ENCODE measurements at regions of chr4 and their contacts with region 1.

Region 1: DNA sequence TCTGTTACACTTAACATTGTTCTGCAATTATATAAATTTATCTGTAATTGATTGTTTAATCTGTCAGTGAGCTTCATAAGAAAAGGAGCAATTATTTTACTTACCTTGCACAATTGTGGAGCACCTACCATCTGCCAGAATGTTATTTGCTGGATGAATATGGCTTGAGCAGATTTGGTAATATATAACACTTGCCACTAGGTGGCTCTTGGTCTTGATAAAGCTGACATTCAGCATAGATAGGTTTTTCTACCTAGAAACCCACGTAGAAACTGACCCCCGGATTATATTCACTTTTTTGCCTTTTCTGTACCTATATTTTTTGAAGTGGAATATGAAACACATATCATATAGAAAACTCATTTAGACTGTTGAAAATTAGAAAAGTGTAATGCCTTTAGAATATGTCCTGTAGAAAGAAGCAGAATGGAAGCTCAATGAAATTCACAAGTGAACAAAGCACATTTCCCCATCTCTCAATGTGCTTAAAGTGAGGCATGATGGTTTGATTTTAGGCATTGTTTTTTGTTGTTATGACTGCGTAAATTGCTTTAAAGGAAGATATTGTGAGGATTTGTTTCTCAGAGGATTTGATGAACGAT is 9.5 kb downstream of the RBPJ start:
- DNase-seq: peak; percentile 53
- CTCF ChIP-seq: peak; percentile 62

Region 2: GRCh38 chr4:25704516-25704915 is 625.8 kb before region 1 on chr4:
- CTCF ChIA-PET with region 1: no interaction called
- POLR2A ChIA-PET with region 1: no interaction called
- DNase-seq: no peak
- CTCF ChIP-seq: no peak

Region 3: DNA sequence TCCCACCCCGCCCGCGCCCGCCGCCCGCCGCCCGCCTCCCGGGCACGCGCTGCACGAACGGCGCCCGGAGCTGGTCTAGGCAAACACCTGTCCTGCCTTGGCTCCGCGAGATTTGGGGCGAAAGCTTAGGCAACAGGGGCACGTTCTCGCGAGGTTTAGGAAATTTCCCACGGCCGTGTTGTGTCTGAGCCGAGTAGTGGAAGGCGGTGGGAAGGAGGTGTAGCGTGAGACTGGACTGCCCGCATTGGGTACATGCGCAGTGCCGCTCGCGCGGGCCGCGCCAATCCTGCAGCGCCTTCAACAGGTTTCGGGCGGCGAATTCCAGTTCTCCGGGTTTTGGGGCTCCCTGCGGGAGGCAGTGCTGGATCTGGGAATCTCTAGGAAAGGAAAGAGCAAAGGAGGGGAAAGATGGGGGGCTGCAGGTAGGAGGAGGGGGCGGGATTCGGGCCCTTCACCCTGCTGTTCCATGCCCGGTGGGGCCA is 10.8 kb before region 1 on chr4:
- CTCF ChIA-PET with region 1: interaction called, 24 read pairs
- POLR2A ChIA-PET with region 1: no interaction called
- DNase-seq: peak; percentile 92
- CTCF ChIP-seq: peak; percentile 57

Region 4: GRCh38 chr4:26349496-26349895 is 19.2 kb after region 1 on chr4:
- CTCF ChIA-PET with region 1: interaction called, 108 read pairs
- POLR2A ChIA-PET with region 1: no interaction called
- DNase-seq: no peak
- CTCF ChIP-seq: no peak

Region 5: DNA sequence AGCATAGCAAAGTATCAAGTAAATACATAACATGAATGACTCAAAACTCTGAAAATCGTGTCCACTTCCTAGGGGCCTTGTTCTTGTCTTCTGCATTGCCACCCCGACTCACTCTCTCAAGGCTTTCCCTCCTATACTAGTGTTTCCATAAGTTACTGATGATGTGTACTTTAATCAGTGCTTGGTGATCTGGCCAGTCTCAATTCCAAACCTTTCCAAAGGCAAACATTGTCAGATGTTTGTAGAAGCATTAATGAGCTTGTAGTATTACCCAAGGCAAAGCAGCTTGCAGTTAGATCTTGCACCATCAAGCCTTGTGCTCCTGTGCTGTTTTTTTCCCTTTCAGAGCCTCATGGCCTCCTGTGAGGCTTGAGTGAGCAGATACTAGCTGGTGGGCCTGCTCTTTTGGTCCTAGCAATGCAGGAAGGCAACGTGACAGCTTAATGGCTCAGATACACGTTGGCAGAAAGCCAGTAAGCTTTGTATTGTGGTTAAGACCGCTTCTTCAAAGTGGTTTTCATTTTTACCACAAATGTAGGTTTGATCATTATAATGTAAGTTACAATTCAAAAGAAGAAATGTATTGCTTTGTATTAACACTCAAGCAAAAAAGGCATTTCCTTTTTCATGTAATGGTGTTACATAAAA is 42.4 kb after region 1 on chr4:
- CTCF ChIA-PET with region 1: interaction called, 12 read pairs
- POLR2A ChIA-PET with region 1: no interaction called
- DNase-seq: peak; percentile 48
- CTCF ChIP-seq: no peak

Region 6: GRCh38 chr4:26410385-26411293 is 80.4 kb after region 1 on chr4:
- CTCF ChIA-PET with region 1: interaction called, 90 read pairs
- POLR2A ChIA-PET with region 1: no interaction called
- DNase-seq: peak; percentile 55
- CTCF ChIP-seq: peak; percentile 53

Measured in GM10248 (cell line).